A673 (cell line): ENCODE measurements at regions of chr1 and their contacts with region 1.

Region 1: GRCh38 chr1:105027838-105028471 is 1278.3 kb downstream of the AMY1C start:
- DNase-seq: peak; percentile 47
- H3K4me3 ChIP-seq: no peak overlapping the region
- H3K27ac ChIP-seq: no peak overlapping the region
- H3K4me1 ChIP-seq: no peaks in the 10 kb centered on the region
- H3K27me3 ChIP-seq: no peaks in the 10 kb centered on the region
- CTCF ChIP-seq: peak; percentile 50

Region 2: DNA sequence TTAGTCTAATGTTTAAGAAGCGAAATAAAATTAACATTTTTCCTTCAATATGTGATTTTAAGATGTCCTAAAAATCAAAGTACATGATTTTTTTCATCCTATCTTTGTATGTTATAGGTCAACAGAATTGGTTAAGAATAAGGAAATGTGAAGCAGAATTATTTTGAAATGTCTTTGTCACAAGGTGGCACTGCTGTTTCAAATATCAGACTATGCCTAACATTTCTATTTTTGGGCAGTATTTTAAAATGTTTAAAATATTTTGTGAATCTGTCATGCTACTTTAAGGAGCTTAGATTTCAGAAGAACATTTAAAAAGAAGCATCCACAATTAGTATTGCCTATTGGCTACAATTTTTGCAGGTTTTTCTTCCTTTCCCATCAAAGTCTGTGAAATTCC is 1239.6 kb before region 1 on chr1:
- CTCF ChIA-PET with region 1: no interaction called
- POLR2A ChIA-PET with region 1: no interaction called
- intact Hi-C with region 1: loop called (anchors 2 kb)
- DNase-seq: peak; percentile 37
- H3K4me3 ChIP-seq: no peak overlapping the region
- H3K27ac ChIP-seq: no peak overlapping the region
- H3K4me1 ChIP-seq: no peaks in the 10 kb centered on the region
- H3K27me3 ChIP-seq: no peaks in the 10 kb centered on the region
- CTCF ChIP-seq: peak; percentile 55

Region 3: DNA sequence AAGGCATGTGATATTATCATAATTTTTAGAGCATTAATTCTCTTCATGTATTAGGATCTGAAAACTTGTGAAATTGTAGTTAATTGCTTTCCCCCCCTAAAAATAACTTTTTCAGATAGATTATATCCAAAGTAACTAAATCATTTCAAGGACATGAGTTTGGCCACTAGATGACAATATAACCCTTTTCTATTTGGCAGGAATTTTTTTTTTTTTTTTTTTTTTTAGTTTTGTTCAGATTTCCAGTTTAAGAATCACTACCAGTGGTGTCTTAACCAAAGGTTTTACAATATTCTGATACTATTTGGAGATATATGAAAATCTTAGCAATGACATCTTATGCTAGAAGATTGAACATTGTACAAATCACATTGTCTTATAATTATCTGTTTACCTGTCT is 907.4 kb before region 1 on chr1:
- CTCF ChIA-PET with region 1: no interaction called
- POLR2A ChIA-PET with region 1: no interaction called
- intact Hi-C with region 1: loop called (anchors 5 kb)
- DNase-seq: peak; percentile 11
- H3K4me3 ChIP-seq: no peak overlapping the region
- H3K27ac ChIP-seq: no peak overlapping the region
- H3K4me1 ChIP-seq: no peaks in the 10 kb centered on the region
- H3K27me3 ChIP-seq: no peaks in the 10 kb centered on the region
- CTCF ChIP-seq: peak; percentile 44; the same call in 1 of the 2 replicates

Region 4: DNA sequence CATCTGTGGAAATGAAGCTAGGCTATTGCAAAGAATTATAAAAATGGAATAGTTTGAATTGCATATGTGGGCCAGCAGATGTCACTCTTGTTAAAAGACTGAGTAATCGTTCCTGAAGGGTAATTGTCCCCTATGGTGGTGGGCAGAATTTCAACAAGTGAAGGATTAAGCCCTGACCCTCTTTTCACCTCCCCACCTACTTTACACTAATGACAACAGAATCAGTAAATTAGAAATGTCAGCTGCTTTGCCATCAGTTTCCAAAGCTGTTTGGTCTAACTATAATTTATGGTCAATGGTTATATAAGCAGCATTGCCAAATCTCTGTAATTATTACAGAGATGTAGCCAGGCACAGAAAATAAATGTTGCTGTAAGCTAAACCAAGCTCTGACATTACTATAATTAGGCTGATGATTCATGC is 379.7 kb before region 1 on chr1:
- CTCF ChIA-PET with region 1: no interaction called
- POLR2A ChIA-PET with region 1: no interaction called
- intact Hi-C with region 1: loop called (anchors 2 kb)
- DNase-seq: peak; percentile 65
- H3K4me3 ChIP-seq: no peak overlapping the region
- H3K27ac ChIP-seq: no peak overlapping the region
- H3K4me1 ChIP-seq: no peaks in the 10 kb centered on the region
- H3K27me3 ChIP-seq: no peaks in the 10 kb centered on the region
- CTCF ChIP-seq: peak; percentile 66

Region 5: GRCh38 chr1:104780470-104781078 is 247.4 kb before region 1 on chr1:
- CTCF ChIA-PET with region 1: no interaction called
- POLR2A ChIA-PET with region 1: no interaction called
- intact Hi-C with region 1: loop called (anchors 1 kb)
- DNase-seq: peak; percentile 65
- H3K4me3 ChIP-seq: no peak overlapping the region
- H3K27ac ChIP-seq: no peak overlapping the region
- H3K4me1 ChIP-seq: no peaks in the 10 kb centered on the region
- H3K27me3 ChIP-seq: no peaks in the 10 kb centered on the region
- CTCF ChIP-seq: peak; percentile 83

Region 6: GRCh38 chr1:104878203-104878909 is 149.6 kb before region 1 on chr1:
- CTCF ChIA-PET with region 1: no interaction called
- POLR2A ChIA-PET with region 1: no interaction called
- intact Hi-C with region 1: no loop called
- DNase-seq: peak; percentile 22
- H3K4me3 ChIP-seq: no peak overlapping the region
- H3K27ac ChIP-seq: no peak overlapping the region
- H3K4me1 ChIP-seq: no peaks in the 10 kb centered on the region
- H3K27me3 ChIP-seq: no peaks in the 10 kb centered on the region
- CTCF ChIP-seq: peak; percentile 47

Region 7: GRCh38 chr1:105100102-105100501 is 72.1 kb after region 1 on chr1:
- CTCF ChIA-PET with region 1: no interaction called
- POLR2A ChIA-PET with region 1: no interaction called
- intact Hi-C with region 1: no loop called
- DNase-seq: no peak
- H3K4me3 ChIP-seq: no peak overlapping the region
- H3K27ac ChIP-seq: no peak overlapping the region
- H3K4me1 ChIP-seq: no peaks in the 10 kb centered on the region
- H3K27me3 ChIP-seq: no peaks in the 10 kb centered on the region
- CTCF ChIP-seq: no peak

Region 8: GRCh38 chr1:105483436-105483835 is 455.5 kb after region 1 on chr1:
- CTCF ChIA-PET with region 1: no interaction called
- POLR2A ChIA-PET with region 1: no interaction called
- intact Hi-C with region 1: no loop called
- DNase-seq: no peak
- H3K4me3 ChIP-seq: no peak overlapping the region
- H3K27ac ChIP-seq: no peak overlapping the region
- H3K4me1 ChIP-seq: no peaks in the 10 kb centered on the region
- H3K27me3 ChIP-seq: no peaks in the 10 kb centered on the region
- CTCF ChIP-seq: no peak